Lower leg skin (tissue), 4 donors: ENCODE measurements at regions of chr5 and their contacts with region 1.

Region 1: GRCh38 chr5:110431603-110432002 is 294.9 kb downstream of the TMEM232 start:
- DNase-seq: no peak
- H3K4me3 ChIP-seq: no peak overlapping the region
- CTCF ChIP-seq: no peak
- POLR2A ChIP-seq: no peak

Region 2: DNA sequence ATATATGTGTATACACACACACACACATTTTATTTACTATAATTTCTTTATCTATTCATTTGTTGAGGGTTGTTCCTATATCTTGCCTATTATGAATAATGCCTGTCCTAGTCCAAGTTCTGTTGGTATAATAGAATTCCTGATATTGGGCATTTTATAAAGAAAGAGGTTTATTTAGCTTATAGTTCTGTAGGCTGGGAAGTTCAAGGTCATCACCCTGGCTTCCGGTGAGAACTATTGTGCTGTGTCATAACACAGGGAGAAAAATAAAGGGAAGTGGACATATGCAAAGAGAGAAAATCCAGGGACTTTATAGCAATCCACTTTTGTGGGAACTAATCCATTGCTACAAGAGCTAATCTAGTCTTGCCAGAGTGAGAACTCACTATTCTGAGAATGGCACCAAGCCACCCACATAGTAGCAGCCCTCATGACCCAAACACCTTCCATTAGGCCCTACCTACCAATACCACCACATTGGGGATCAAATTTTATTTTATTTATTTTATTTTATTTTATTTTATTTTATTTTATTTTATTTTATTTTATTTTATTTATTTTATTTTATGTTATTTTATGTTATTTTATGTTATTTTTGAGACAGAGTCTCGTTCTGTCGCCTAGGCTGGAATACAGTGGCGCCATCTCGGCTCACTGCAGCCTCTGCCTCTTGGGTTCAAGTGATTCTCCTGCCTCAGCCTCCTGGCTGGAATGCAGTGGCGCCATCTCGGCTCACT is 1609.2 kb before region 1 on chr5:
- intact Hi-C with region 1: loop called (anchors 5 kb)
- DNase-seq: no peak
- H3K4me3 ChIP-seq: no peak overlapping the region
- CTCF ChIP-seq: no peak
- POLR2A ChIP-seq: no peak

Region 3: DNA sequence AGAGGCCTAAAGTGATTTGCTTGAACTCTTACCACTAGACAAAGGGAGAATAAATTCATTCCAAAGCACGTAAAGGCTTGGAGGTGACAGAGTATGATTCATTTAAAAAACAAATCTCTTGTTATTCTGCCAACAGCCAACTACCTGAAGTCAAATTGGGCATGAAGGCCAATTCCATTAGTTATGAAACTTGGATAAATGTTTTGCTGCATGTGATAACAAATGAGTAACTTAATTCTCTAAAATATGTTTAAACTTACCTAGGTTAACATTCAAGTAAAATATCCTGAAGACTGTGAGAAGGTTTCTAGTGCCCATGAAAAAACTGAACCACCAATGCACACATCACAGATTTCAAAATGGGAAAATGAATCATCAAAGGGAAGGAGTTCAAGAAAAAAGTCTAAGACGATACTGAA is 519.8 kb after region 1 on chr5:
- intact Hi-C with region 1: no loop called
- DNase-seq: no peak
- H3K4me3 ChIP-seq: no peak overlapping the region
- CTCF ChIP-seq: no peak
- POLR2A ChIP-seq: no peak